ENCODE measurements at regions of chr1 and their contacts with region 1.

Region 1: GRCh38 chr1:109483672-109484518 is at the start of gene ATXN7L2:
- DNase-seq: peak; percentile 86 to 98 (median 92)
- ATAC-seq: peak; percentile 83
- H3K4me3 ChIP-seq: peak within 1 kb of the TSS; percentile 76
- H3K4me3 Mint-ChIP-seq: peak within 1 kb of the TSS; percentile 93
- H3K27ac ChIP-seq: peak within 1 kb of the TSS; percentile 74 to 78
- H3K27ac Mint-ChIP-seq: peak within 1 kb of the TSS; percentile 87
- H3K4me1 ChIP-seq: peaks cover 23% of the 10 kb centered on the region
- H3K4me1 Mint-ChIP-seq: peaks cover 39% of the 10 kb centered on the region
- H3K27me3 ChIP-seq: no peaks in the 10 kb centered on the region
- H3K27me3 Mint-ChIP-seq: peaks cover 1% of the 10 kb centered on the region
- CTCF ChIP-seq: no peak
- total RNA-seq, gene ATXN7L2: 11.8 to 13.1 TPM

Region 2: DNA sequence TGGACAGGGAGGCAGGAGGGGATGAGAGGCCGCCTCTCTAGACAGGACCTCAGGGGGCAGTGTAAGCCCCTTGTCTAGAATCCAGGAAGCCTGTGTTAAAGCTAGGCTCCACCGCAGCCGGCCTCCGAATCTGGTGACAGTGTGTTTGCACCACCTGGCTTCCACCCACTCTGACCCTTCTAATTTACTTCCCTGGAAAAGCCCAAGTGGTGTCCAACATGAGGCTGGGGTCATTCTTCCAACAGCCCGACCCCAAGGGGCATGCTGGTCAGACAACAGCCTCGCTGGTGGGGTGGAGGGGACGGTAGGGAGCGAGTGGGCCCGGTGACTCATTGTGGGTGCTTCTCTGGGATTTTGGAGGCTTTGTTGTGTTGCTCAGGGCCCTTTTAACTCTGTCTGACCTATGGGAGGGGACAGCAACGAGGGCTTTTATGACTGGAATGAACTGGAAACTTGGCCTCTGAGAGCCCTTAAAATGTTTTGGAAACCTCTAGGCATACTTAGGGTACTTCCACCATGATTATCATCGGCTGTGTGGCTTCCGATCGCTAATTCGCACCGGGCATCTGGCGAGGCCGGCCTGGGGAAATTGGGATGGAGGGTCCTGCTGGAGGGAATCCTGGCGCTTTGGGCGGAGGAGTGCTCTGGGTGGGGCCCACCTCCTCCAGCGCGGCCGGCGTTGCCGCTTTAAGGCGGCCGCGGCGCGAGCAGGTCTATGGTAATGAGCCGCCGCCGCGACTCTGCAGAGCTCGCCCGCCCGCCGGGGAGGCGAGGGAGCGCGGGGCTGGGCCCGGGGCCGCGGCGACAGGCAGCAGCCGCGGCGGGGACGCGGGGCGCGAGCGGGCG is 234.9 kb before region 1 on chr1 and contains the start of gene CELSR2:
- CTCF ChIA-PET with region 1: no interaction called
- POLR2A ChIA-PET with region 1: interaction called, 3 read pairs
- intact Hi-C with region 1: loop called in 1 of 2 experiments (anchors 1 kb)
- DNase-seq: peak; percentile 20 to 84 (median 52)
- ATAC-seq: peak; percentile 98
- H3K4me3 ChIP-seq: peak within 1 kb of the TSS; percentile 39
- H3K4me3 Mint-ChIP-seq: peak within 1 kb of the TSS; percentile 58
- H3K27ac ChIP-seq: no peak within 1 kb of the TSS
- H3K27ac Mint-ChIP-seq: no peak within 1 kb of the TSS
- H3K4me1 ChIP-seq: peaks cover 20% of the 10 kb centered on the region
- H3K4me1 Mint-ChIP-seq: peaks cover 16% of the 10 kb centered on the region
- H3K27me3 ChIP-seq: peaks cover 7 to 13% of the 10 kb centered on the region in 2 experiments
- H3K27me3 Mint-ChIP-seq: peaks cover 4% of the 10 kb centered on the region
- CTCF ChIP-seq: no peak
- total RNA-seq, gene CELSR2: 3.6 TPM

Region 3: DNA sequence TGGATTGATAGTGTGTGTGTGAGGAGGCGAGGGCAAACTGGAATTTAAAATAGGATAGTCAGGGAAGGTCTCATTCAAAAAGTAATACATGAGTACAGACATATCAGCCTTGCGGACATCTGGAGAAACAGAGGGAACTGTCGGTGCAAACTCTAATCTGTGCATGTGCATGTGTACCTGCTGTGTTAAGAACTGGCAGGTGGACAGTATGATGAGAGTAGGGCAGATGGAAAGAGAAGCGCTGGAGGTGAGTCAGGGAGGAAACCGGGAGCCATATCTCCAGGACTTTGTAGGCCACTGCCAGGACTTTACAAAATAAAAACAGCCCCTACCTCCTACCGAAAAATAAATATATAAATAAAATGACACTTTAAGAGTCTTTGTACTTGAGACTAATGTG is 145.8 kb before region 1 on chr1:
- CTCF ChIA-PET with region 1: no interaction called
- POLR2A ChIA-PET with region 1: no interaction called
- intact Hi-C with region 1: no loop called
- DNase-seq: no peak
- ATAC-seq: no peak
- H3K4me3 ChIP-seq: no peak overlapping the region
- H3K4me3 Mint-ChIP-seq: no peak overlapping the region
- H3K27ac ChIP-seq: no peak overlapping the region
- H3K27ac Mint-ChIP-seq: no peak overlapping the region
- H3K4me1 ChIP-seq: no peaks in the 10 kb centered on the region
- H3K4me1 Mint-ChIP-seq: no peaks in the 10 kb centered on the region
- H3K27me3 ChIP-seq: no peaks in the 10 kb centered on the region
- H3K27me3 Mint-ChIP-seq: no peaks in the 10 kb centered on the region
- CTCF ChIP-seq: no peak

Region 4: GRCh38 chr1:109493805-109494539 is 10.1 kb after region 1 on chr1 and contains the start of gene CYB561D1:
- CTCF ChIA-PET with region 1: interaction called, 30 read pairs
- POLR2A ChIA-PET with region 1: interaction called, 21 read pairs
- intact Hi-C with region 1: no loop called
- DNase-seq: peak; percentile 78 to 94 (median 88)
- ATAC-seq: peak; percentile 90
- H3K4me3 ChIP-seq: peak within 1 kb of the TSS; percentile 100
- H3K4me3 Mint-ChIP-seq: peak within 1 kb of the TSS; percentile 97
- H3K27ac ChIP-seq: peak within 1 kb of the TSS; percentile 59 to 66
- H3K27ac Mint-ChIP-seq: peak within 1 kb of the TSS; percentile 88
- H3K4me1 ChIP-seq: peaks cover 62% of the 10 kb centered on the region
- H3K4me1 Mint-ChIP-seq: peaks cover 54% of the 10 kb centered on the region
- H3K27me3 ChIP-seq: no peaks in the 10 kb centered on the region
- H3K27me3 Mint-ChIP-seq: no peaks in the 10 kb centered on the region
- CTCF ChIP-seq: peak; percentile 92
- total RNA-seq, gene CYB561D1: 12.0 to 15.0 TPM

Region 5: GRCh38 chr1:109532365-109533136 is 48.7 kb after region 1 on chr1:
- CTCF ChIA-PET with region 1: interaction called, 474 read pairs
- POLR2A ChIA-PET with region 1: interaction called, 25 read pairs
- intact Hi-C with region 1: no loop called
- DNase-seq: peak; percentile 83 to 95 (median 92)
- ATAC-seq: peak; percentile 92
- H3K4me3 ChIP-seq: peak overlapping the region; percentile 37
- H3K4me3 Mint-ChIP-seq: peak overlapping the region; percentile 84
- H3K27ac ChIP-seq: no peak overlapping the region
- H3K27ac Mint-ChIP-seq: peak overlapping the region; percentile 29
- H3K4me1 ChIP-seq: peaks cover 35% of the 10 kb centered on the region
- H3K4me1 Mint-ChIP-seq: peaks cover 35% of the 10 kb centered on the region
- H3K27me3 ChIP-seq: no peaks in the 10 kb centered on the region
- H3K27me3 Mint-ChIP-seq: no peaks in the 10 kb centered on the region
- CTCF ChIP-seq: peak; percentile 78

Region 6: GRCh38 chr1:109947582-109948286 is 463.8 kb after region 1 on chr1:
- CTCF ChIA-PET with region 1: no interaction called
- POLR2A ChIA-PET with region 1: no interaction called
- intact Hi-C with region 1: no loop called
- DNase-seq: no peak
- ATAC-seq: no peak
- H3K4me3 ChIP-seq: no peak overlapping the region
- H3K4me3 Mint-ChIP-seq: no peak overlapping the region
- H3K27ac ChIP-seq: no peak overlapping the region
- H3K27ac Mint-ChIP-seq: no peak overlapping the region
- H3K4me1 ChIP-seq: no peaks in the 10 kb centered on the region
- H3K4me1 Mint-ChIP-seq: peaks cover 5% of the 10 kb centered on the region
- H3K27me3 ChIP-seq: no peaks in the 10 kb centered on the region
- H3K27me3 Mint-ChIP-seq: no peaks in the 10 kb centered on the region
- CTCF ChIP-seq: no peak

Region 7: GRCh38 chr1:109984456-109985275 is 500.8 kb after region 1 on chr1 and contains the start of gene AHCYL1:
- CTCF ChIA-PET with region 1: no interaction called
- POLR2A ChIA-PET with region 1: no interaction called
- intact Hi-C with region 1: loop called in 1 of 2 experiments (anchors 2 kb)
- DNase-seq: peak; percentile 98 to 100 (median 99)
- ATAC-seq: peak; percentile 99
- H3K4me3 ChIP-seq: peak within 1 kb of the TSS; percentile 90
- H3K4me3 Mint-ChIP-seq: peak within 1 kb of the TSS; percentile 99
- H3K27ac ChIP-seq: peak within 1 kb of the TSS; percentile 71 to 80
- H3K27ac Mint-ChIP-seq: peak within 1 kb of the TSS; percentile 97
- H3K4me1 ChIP-seq: peaks cover 29% of the 10 kb centered on the region
- H3K4me1 Mint-ChIP-seq: peaks cover 51% of the 10 kb centered on the region
- H3K27me3 ChIP-seq: no peaks in the 10 kb centered on the region
- H3K27me3 Mint-ChIP-seq: no peaks in the 10 kb centered on the region
- CTCF ChIP-seq: peak; percentile 92
- total RNA-seq, gene AHCYL1: 6.9 to 8.4 TPM